ENCODE measurements at regions of chr19 and their contacts with region 1.

Region 1: DNA sequence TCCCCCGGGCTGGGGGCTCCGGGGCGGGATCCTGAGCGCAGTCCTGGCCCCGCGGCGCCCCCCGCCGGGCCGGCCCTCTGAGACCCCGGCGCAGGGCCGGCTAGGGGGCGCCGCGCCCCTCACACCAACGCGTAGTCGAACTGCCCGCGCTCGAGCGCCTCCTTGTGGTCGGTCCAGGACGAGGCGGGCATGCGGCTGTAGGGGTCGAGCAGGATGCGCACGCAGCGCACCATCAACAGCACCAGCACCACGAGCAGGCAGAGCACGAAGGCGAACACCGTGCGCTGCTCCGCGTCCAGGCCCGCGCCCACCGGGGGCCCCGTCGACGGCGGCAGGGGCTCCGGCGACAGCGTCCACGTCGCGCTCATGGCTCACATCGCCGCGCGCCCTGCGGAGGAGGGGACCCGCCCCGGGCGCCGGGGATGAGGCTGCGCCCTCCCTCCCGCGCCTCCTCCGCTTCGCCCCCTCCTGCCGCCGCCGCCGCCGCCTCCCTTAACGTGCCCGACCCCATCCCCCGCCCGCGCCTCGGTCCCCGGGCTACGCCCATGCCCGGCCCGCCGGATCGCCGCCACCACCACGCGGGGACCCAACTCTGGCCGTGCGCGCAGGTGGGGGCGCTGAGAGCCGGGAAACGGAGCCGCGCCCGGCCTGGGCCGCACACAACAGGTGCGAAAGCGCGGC is 624 bp downstream of the CTXN1 start:
- DNase-seq: peak; percentile 84
- ATAC-seq: peak; percentile 26
- H3K4me3 ChIP-seq: peak overlapping the region; percentile 55
- H3K27ac ChIP-seq: no peak overlapping the region
- H3K4me1 ChIP-seq: peaks cover 48% of the 10 kb centered on the region
- H3K27me3 ChIP-seq: no peaks in the 10 kb centered on the region
- CTCF ChIP-seq: peak; percentile 93

Region 2: DNA sequence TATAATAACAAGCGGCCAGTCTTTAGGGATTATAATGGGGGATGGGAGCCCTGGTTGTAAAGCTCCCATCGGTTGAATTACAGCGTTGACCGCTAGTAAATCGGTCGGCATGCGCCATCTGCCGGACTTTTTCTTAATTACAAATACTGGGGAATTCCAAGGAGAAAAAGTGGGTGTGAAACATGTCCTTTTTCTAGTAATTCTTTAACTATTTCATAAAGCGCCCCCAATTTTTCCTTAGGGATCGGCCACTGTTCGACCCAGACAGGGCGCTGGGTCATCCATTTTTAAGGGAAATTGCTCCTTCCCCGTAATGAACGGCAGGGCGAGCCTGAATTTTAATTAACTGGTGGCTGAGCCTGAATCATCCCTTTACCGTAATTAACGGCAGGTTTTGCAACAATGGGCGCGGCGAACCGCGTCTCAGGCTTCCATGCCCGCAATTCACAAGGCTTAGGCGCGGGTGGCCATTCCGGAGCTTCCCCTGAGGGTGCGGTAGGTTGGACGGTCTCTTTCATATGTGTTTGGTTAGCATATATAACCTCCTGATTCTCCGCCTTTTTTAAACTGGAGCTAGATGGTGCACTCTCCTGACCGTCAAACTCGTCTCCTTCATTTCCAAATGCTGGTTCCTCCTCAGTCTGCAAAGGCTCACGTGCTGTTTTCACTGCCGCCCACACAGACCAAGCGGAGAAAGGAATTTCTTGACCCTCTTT is 125.5 kb before region 1 on chr19:
- CTCF ChIA-PET with region 1: no interaction called
- POLR2A ChIA-PET with region 1: interaction called, 26 read pairs
- intact Hi-C with region 1: no loop called
- DNase-seq: peak; percentile 94
- ATAC-seq: peak; percentile 68
- H3K4me3 ChIP-seq: peak overlapping the region; percentile 68
- H3K27ac ChIP-seq: no peak overlapping the region
- H3K4me1 ChIP-seq: peaks cover 34% of the 10 kb centered on the region
- H3K27me3 ChIP-seq: no peaks in the 10 kb centered on the region
- CTCF ChIP-seq: peak; percentile 83

Region 3: DNA sequence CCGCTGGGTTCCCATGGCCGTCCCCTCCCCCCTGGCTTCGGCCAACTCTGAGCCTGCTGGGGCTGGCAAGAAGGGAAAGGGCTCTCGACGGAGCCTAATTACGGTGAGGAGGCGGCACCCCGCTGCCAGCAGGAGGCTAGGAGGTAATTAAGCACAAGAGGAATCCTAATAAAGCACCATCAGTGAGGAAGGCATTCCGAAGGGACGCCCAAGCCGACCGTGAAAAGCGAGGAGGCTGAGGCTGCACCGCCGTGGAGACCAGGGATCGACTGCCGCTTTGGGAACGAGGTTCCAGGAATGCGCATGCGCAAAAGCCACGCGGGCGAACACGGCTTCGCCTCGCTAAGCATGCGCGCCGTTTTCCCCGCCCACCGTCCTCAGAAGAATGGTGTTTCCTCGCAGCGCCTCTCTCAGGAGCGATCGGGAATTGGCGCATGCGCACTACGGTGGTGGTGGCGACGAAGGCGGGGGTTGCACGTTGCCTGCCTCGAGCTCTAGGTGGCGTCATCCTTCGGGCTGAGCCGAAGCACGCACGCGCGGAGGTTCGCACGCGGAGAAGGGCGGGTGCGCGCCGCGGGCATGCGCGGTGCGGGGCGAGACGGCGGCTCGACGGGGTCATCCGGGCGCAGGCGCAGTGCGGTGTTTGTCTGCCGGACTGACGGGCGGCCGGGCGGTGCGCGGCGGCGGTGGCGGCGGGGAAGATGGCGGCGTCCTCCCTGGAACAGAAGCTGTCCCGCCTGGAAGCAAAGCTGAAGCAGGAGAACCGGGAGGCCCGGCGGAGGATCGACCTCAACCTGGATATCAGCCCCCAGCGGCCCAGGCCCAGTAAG is 21.9 kb before region 1 on chr19 and contains the start of gene MAP2K7:
- CTCF ChIA-PET with region 1: interaction called, 10 read pairs
- POLR2A ChIA-PET with region 1: interaction called, 3 read pairs
- intact Hi-C with region 1: loop called (anchors 1 kb)
- DNase-seq: peak; percentile 100
- ATAC-seq: peak; percentile 83
- H3K4me3 ChIP-seq: peak within 1 kb of the TSS; percentile 77
- H3K27ac ChIP-seq: peak within 1 kb of the TSS; percentile 65
- H3K4me1 ChIP-seq: peaks cover 20% of the 10 kb centered on the region
- H3K27me3 ChIP-seq: no peaks in the 10 kb centered on the region
- CTCF ChIP-seq: peak; percentile 82
- total RNA-seq, gene MAP2K7: 39.3 and 40.5 TPM in 2 replicates

Region 4: GRCh38 chr19:7935412-7935811 is 10.1 kb after region 1 on chr19:
- CTCF ChIA-PET with region 1: no interaction called
- POLR2A ChIA-PET with region 1: no interaction called
- intact Hi-C with region 1: no loop called
- DNase-seq: no peak
- ATAC-seq: no peak
- H3K4me3 ChIP-seq: no peak overlapping the region
- H3K27ac ChIP-seq: no peak overlapping the region
- H3K4me1 ChIP-seq: peaks cover 5% of the 10 kb centered on the region
- H3K27me3 ChIP-seq: no peaks in the 10 kb centered on the region
- CTCF ChIP-seq: no peak

Region 5: DNA sequence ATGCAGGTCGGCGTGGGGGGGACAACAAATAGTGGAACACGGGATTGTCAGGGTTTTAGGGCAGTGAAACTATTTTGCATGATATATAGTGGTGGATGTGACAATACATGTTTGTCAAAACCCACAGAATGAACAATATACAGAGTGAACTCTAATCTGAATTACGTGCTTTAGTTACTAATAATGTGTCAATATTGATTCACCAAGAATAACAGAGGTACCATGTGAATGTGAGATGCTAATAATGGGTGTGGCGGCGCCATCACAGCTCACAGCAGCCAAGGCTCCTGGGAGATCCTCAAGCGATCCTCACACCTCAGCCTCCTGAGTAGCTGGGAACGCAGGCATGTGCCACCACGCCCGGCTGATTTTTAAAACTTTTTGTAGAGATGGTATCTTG is 67.3 kb after region 1 on chr19:
- CTCF ChIA-PET with region 1: no interaction called
- POLR2A ChIA-PET with region 1: interaction called, 20 read pairs
- intact Hi-C with region 1: no loop called
- DNase-seq: peak; percentile 96
- ATAC-seq: peak; percentile 76
- H3K4me3 ChIP-seq: peak overlapping the region; percentile 18; the same call in 1 of the 2 replicates
- H3K27ac ChIP-seq: peak overlapping the region; percentile 89
- H3K4me1 ChIP-seq: peaks cover 64% of the 10 kb centered on the region
- H3K27me3 ChIP-seq: no peaks in the 10 kb centered on the region
- CTCF ChIP-seq: no peak

Region 6: DNA sequence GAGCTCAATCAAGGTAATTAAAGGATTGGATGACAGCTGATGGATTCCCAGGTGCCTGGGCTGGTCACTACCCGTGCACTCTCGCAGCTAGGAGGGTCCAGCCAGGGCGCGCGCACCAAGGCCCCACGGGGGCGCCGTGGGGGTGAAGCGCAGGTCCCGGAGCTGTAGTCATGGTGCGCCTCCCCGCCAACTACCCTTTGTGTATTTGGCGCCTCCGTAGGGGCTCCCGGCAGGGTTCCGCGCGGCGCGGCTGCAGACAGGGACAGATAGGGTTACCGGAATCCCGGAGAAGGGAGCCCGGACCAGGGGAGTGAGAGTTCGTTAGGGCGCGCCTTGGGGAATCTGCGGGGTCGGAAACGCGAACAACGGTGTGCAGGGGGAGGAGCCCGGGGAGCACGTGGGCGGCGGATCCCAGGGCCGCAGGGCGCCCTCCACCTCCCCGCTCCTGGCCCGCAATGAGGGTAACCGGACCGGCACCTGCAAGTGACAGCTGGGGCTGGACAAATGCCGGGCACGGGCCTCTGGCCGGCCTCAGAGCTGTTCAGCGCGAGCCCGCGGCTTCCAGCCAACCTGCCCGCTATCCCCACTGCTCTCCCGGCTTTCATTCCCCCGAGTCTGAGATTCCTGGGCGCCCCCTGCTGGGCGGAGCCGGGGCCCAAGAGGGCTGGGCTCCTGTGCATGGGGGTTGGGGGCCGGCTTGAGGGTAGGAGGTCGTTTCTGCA is 580.5 kb after region 1 on chr19:
- CTCF ChIA-PET with region 1: no interaction called
- POLR2A ChIA-PET with region 1: interaction called, 10 read pairs
- intact Hi-C with region 1: no loop called
- DNase-seq: peak; percentile 87
- ATAC-seq: peak; percentile 90
- H3K4me3 ChIP-seq: peak overlapping the region; percentile 76
- H3K27ac ChIP-seq: peak overlapping the region; percentile 1; the same call in 1 of the 2 replicates
- H3K4me1 ChIP-seq: no peaks in the 10 kb centered on the region
- H3K27me3 ChIP-seq: no peaks in the 10 kb centered on the region
- CTCF ChIP-seq: peak; percentile 99

Measured in PC-3 (cell line).